Head of caudate nucleus (tissue), 42 donors: ENCODE measurements at regions of chr9 and their contacts with region 1.

Region 1: DNA sequence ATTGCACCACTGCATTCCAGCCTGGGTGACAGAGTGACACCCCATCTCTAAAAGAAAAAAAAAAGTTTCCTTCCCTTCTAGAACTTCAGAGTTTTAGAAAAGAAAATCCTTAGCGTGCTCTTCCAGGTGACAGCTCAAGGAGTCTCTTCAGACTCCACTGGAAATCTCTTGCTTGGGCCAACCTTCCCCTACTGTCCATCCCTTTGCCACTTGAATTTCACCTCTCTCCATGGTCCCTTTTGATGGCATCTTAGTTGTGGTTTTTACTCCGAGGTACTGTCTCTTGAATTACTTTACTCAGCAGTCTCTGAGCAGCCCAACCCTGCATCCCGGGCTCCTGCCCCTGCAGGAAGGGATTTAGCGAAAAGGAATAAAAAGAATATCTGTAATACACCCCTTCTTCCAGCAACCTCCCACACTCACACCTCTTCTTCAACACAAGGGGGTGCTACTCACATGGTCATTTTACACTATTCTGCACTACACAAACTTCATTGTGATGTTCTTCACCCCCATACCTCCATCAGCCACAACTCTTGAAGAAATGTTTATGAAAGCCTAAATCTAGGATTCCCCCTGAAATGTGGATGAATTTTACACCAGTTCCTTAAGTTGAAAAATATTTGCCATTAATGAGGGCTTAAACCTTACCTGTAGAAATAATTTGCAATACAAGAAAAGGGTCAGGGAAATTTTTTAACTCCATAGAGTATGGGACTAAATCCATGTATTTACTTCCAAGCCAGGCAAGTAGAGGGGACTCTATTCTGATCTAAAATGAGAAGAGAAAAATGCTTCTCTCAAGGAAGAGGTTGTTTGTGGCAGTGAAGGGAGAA is 25.9 kb downstream of the TPD52L3 start:
- DNase-seq: peak in 24 of 42 donors; percentile 10 to 75 (median 37)

Region 2: DNA sequence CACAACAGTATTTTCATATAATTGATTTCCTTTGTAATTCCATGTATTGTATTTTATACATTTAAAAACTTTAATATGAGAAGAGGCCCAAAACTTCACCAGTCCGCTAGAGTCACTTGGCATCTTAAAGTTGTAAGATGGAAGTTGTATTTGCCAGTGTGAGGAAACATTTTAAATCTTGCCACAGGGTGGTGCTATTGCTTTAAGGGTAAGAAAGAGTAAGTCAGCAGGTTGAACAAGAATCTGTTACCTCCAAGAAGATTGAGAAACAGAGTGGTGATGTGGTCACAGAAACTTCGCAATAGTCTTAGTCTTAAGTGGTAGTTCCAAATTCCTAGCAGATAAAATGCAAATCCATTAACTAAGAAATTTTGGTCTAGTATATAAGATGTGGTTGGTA is 298.9 kb before region 1 on chr9:
- intact Hi-C with region 1: no loop called
- DNase-seq: peak in 16 of 42 donors; percentile 7 to 73 (median 43)

Region 3: GRCh38 chr9:6566409-6567139 is 212.5 kb after region 1 on chr9:
- intact Hi-C with region 1: loop called (anchors 5 kb)
- DNase-seq: peak in 31 of 42 donors; percentile 12 to 83 (median 42)

Region 4: DNA sequence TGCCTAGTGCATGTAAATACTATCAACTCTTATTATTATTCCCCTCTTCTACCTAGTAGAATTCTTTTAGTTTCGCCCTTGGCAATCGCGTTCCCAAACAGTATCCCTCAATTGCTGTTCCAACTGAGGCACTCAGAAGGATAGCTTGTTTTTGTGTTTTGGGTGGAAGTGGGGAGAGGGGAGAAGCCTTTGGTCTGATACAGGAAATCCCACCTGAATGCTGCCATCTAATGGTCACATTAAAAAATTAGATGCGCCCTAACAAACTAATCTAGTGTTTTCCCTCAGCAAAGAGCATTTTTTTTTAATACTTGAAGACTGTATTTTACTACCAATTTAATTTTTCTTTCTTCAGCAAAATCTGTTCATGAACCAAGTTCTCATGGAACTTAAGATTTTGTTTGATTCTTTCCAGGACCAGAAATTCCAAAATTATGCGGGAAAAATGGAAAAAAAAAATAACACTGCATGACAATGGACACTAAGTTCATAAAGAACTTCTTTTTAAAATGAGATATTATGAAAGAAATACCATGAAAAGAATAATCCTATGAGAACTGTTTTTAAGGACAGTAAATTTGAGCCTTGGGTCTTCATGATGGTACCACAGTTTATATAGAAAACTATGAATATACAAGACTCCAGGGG is 313.7 kb after region 1 on chr9:
- intact Hi-C with region 1: loop called (anchors 10 kb)
- DNase-seq: peak in 12 of 42 donors; percentile 9 to 63 (median 27)